ENCODE measurements at regions of chr5 and their contacts with region 1.

Region 1: GRCh38 chr5:153147891-153148623 is 342.4 kb upstream of the GRIA1 start:
- DNase-seq: no peak
- H3K4me3 ChIP-seq: no peak overlapping the region
- H3K27ac ChIP-seq: no peak overlapping the region
- H3K4me1 ChIP-seq: no peaks in the 10 kb centered on the region
- H3K27me3 ChIP-seq: no peaks in the 10 kb centered on the region
- CTCF ChIP-seq: peak in 2 of 3 experiments; percentile 55 to 64

Region 2: GRCh38 chr5:152532714-152533113 is 615.3 kb before region 1 on chr5:
- intact Hi-C with region 1: loop called (anchors 2 kb)
- DNase-seq: no peak
- H3K4me3 ChIP-seq: no peak overlapping the region
- H3K27ac ChIP-seq: no peak overlapping the region
- H3K4me1 ChIP-seq: no peaks in the 10 kb centered on the region
- H3K27me3 ChIP-seq: no peaks in the 10 kb centered on the region
- CTCF ChIP-seq: peak; percentile 48 to 66 (median 59)

Region 3: GRCh38 chr5:152560512-152561137 is 587.4 kb before region 1 on chr5:
- intact Hi-C with region 1: loop called (anchors 1 kb)
- DNase-seq: peak in 1 of 2 donors; percentile 76
- H3K4me3 ChIP-seq: no peak overlapping the region
- H3K27ac ChIP-seq: no peak overlapping the region
- H3K4me1 ChIP-seq: peaks cover 0 to 4% of the 10 kb centered on the region in 2 donors
- H3K27me3 ChIP-seq: no peaks in the 10 kb centered on the region
- CTCF ChIP-seq: peak; percentile 62 to 83 (median 71)